Activated CD8-positive, alpha-beta T cell treated with anti-CD3 and anti-CD28 coated beads for 36 hours (primary cell): ENCODE measurements at regions of chr9 and their contacts with region 1.

Region 1: GRCh38 chr9:92669890-92670708 is at the start of gene IPPK:
- DNase-seq: peak; percentile 99
- ATAC-seq: peak; percentile 95
- H3K4me3 Mint-ChIP-seq: peak within 1 kb of the TSS; percentile 95
- H3K27ac Mint-ChIP-seq: peak within 1 kb of the TSS; percentile 95
- H3K4me1 Mint-ChIP-seq: peaks cover 33% of the 10 kb centered on the region
- H3K27me3 Mint-ChIP-seq: no peaks in the 10 kb centered on the region
- CTCF ChIP-seq: no peak
- total RNA-seq, gene IPPK: 12.5 to 15.8 TPM

Region 2: GRCh38 chr9:91837981-91838731 is 831.9 kb before region 1 on chr9:
- CTCF ChIA-PET with region 1: no interaction called
- POLR2A ChIA-PET with region 1: no interaction called
- intact Hi-C with region 1: no loop called
- DNase-seq: no peak
- ATAC-seq: no peak
- H3K4me3 Mint-ChIP-seq: no peak overlapping the region
- H3K27ac Mint-ChIP-seq: no peak overlapping the region
- H3K4me1 Mint-ChIP-seq: no peaks in the 10 kb centered on the region
- H3K27me3 Mint-ChIP-seq: peaks cover 12% of the 10 kb centered on the region
- CTCF ChIP-seq: no peak

Region 3: DNA sequence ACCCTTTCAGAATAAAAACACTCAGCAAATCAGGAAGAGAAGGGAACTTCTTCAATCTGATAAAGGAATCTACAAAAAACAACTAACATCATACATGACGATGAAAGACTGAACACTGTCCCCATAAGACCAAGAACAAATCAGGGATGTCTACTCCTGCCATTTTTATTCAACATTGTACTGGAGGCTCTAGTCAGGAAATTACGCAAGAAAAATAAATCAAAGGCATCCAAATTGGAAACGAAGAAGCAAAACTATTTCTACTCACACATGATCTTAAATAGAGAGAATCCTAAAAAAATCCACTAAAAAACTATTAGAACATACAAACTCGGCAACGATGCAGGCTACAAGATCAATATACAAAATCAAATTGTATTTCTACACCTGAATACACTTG is 42.4 kb before region 1 on chr9:
- CTCF ChIA-PET with region 1: no interaction called
- POLR2A ChIA-PET with region 1: no interaction called
- intact Hi-C with region 1: no loop called
- DNase-seq: no peak
- ATAC-seq: no peak
- H3K4me3 Mint-ChIP-seq: no peak overlapping the region
- H3K27ac Mint-ChIP-seq: no peak overlapping the region
- H3K4me1 Mint-ChIP-seq: peaks cover 20% of the 10 kb centered on the region
- H3K27me3 Mint-ChIP-seq: no peaks in the 10 kb centered on the region
- CTCF ChIP-seq: no peak

Region 4: GRCh38 chr9:92764988-92765936 is 95.2 kb after region 1 on chr9:
- CTCF ChIA-PET with region 1: interaction called, 9 read pairs
- POLR2A ChIA-PET with region 1: interaction called, 16 read pairs
- intact Hi-C with region 1: no loop called
- DNase-seq: peak; percentile 99
- ATAC-seq: peak; percentile 94
- H3K4me3 Mint-ChIP-seq: peak overlapping the region; percentile 86
- H3K27ac Mint-ChIP-seq: peak overlapping the region; percentile 94
- H3K4me1 Mint-ChIP-seq: peaks cover 44% of the 10 kb centered on the region
- H3K27me3 Mint-ChIP-seq: no peaks in the 10 kb centered on the region
- CTCF ChIP-seq: peak; percentile 99